ENCODE measurements at regions of chr6 and their contacts with region 1.

Region 1: GRCh38 chr6:3742426-3743344 is 8.8 kb downstream of the PXDC1 start:
- DNase-seq: peak; percentile 47 to 73
- ATAC-seq: peak; percentile 80 to 87
- H3K4me3 ChIP-seq: no peak overlapping the region
- H3K27ac ChIP-seq: peak overlapping the region; percentile 59 to 74; a peak in 5 of 6 replicates
- H3K4me1 ChIP-seq: peaks cover 20% of the 10 kb centered on the region
- CTCF ChIP-seq: peak; percentile 78
- EP300 ChIP-seq: no peak
- POLR2A ChIP-seq: no peak
- RAD21 ChIP-seq: peak; percentile 94

Region 2: GRCh38 chr6:3990692-3991501 is 248.2 kb after region 1 on chr6:
- CTCF ChIA-PET with region 1: interaction called, 22 read pairs
- POLR2A ChIA-PET with region 1: no interaction called
- DNase-seq: peak; percentile 55 to 80
- ATAC-seq: peak; percentile 97 to 98
- H3K4me3 ChIP-seq: no peak overlapping the region
- H3K27ac ChIP-seq: peak overlapping the region; percentile 34 to 69; a peak in 4 of 6 replicates
- H3K4me1 ChIP-seq: peaks cover 19% of the 10 kb centered on the region; the same call in 2 of the 3 replicates
- CTCF ChIP-seq: peak; percentile 65
- EP300 ChIP-seq: no peak
- POLR2A ChIP-seq: no peak
- RAD21 ChIP-seq: peak; percentile 84 to 90